MCF 10A (cell line): ENCODE measurements at regions of chr4 and their contacts with region 1.

Region 1: GRCh38 chr4:147096667-147097604 is 151.3 kb upstream of the TTC29 start:
- DNase-seq: peak; percentile 84
- H3K4me3 Mint-ChIP-seq: peak overlapping the region; percentile 12
- H3K27ac Mint-ChIP-seq: peak overlapping the region; percentile 80
- H3K4me1 Mint-ChIP-seq: peaks cover 24% of the 10 kb centered on the region
- H3K27me3 Mint-ChIP-seq: no peaks in the 10 kb centered on the region
- CTCF ChIP-seq: peak; percentile 50

Region 2: GRCh38 chr4:146243141-146243882 is 853.6 kb before region 1 on chr4:
- CTCF ChIA-PET with region 1: interaction called, 3 read pairs
- POLR2A ChIA-PET with region 1: no interaction called
- intact Hi-C with region 1: loop called (anchors 2 kb)
- DNase-seq: no peak
- H3K4me3 Mint-ChIP-seq: no peak overlapping the region
- H3K27ac Mint-ChIP-seq: no peak overlapping the region
- H3K4me1 Mint-ChIP-seq: peaks cover 19% of the 10 kb centered on the region
- H3K27me3 Mint-ChIP-seq: no peaks in the 10 kb centered on the region
- CTCF ChIP-seq: peak; percentile 48

Region 3: GRCh38 chr4:146522098-146522868 is 574.7 kb before region 1 on chr4:
- CTCF ChIA-PET with region 1: interaction called, 4 read pairs
- POLR2A ChIA-PET with region 1: interaction called, 3 read pairs
- intact Hi-C with region 1: loop called (anchors 10 kb)
- DNase-seq: peak; percentile 85
- H3K4me3 Mint-ChIP-seq: no peak overlapping the region
- H3K27ac Mint-ChIP-seq: no peak overlapping the region
- H3K4me1 Mint-ChIP-seq: peaks cover 22% of the 10 kb centered on the region
- H3K27me3 Mint-ChIP-seq: no peaks in the 10 kb centered on the region
- CTCF ChIP-seq: no peak

Region 4: DNA sequence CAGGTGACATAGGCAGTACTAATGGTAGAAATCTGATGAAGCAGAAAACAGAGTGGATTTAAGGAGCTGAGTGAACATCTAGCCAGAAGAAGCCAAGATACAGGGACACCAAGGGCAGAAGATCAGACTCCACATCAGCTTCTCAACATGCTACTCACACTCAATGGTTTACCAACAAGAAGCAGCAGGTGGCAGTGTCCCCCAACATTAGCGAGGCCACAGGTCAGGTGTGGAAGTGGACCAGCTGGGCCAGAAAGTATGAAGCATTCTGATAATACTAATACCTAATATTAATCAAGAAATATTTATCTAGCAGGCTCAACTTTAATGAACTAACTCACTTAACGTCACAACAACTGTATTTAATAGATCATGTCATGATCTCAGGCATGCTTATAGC is 77.9 kb before region 1 on chr4:
- CTCF ChIA-PET with region 1: interaction called, 285 read pairs
- POLR2A ChIA-PET with region 1: interaction called, 34 read pairs
- intact Hi-C with region 1: loop called (anchors 1 kb)
- DNase-seq: peak; percentile 84
- H3K4me3 Mint-ChIP-seq: no peak overlapping the region
- H3K27ac Mint-ChIP-seq: no peak overlapping the region
- H3K4me1 Mint-ChIP-seq: peaks cover 26% of the 10 kb centered on the region
- H3K27me3 Mint-ChIP-seq: no peaks in the 10 kb centered on the region
- CTCF ChIP-seq: peak; percentile 89

Region 5: GRCh38 chr4:147050356-147050765 is 46.6 kb before region 1 on chr4:
- CTCF ChIA-PET with region 1: interaction called, 9 read pairs
- POLR2A ChIA-PET with region 1: interaction called, 12 read pairs
- intact Hi-C with region 1: no loop called
- DNase-seq: peak; percentile 80
- H3K4me3 Mint-ChIP-seq: peak overlapping the region; percentile 26
- H3K27ac Mint-ChIP-seq: peak overlapping the region; percentile 29
- H3K4me1 Mint-ChIP-seq: peaks cover 13% of the 10 kb centered on the region
- H3K27me3 Mint-ChIP-seq: no peaks in the 10 kb centered on the region
- CTCF ChIP-seq: no peak